GM12878 (cell line): ENCODE measurements at regions of chr10 and their contacts with region 1.

Region 1: GRCh38 chr10:122298598-122299301 is 27.7 kb downstream of the BTBD16 start:
- DNase-seq: no peak
- ATAC-seq: peak; percentile 95
- H3K4me3 ChIP-seq: no peak overlapping the region
- H3K27ac ChIP-seq: no peak overlapping the region
- H3K4me1 ChIP-seq: peaks cover 5% of the 10 kb centered on the region
- H3K27me3 ChIP-seq: no peaks in the 10 kb centered on the region; a peak in 1 of 4 replicates
- CTCF ChIP-seq: peak; percentile 87 to 88 (median 87)
- EP300 ChIP-seq: no peak
- POLR2A ChIP-seq: no peak
- RAD21 ChIP-seq: peak; percentile 93

Region 2: GRCh38 chr10:122207596-122207995 is 91.2 kb before region 1 on chr10:
- CTCF ChIA-PET with region 1: no interaction called
- POLR2A ChIA-PET with region 1: no interaction called
- RAD21 ChIA-PET with region 1: no interaction called
- SMC1A ChIA-PET with region 1: no interaction called
- in situ Hi-C with region 1: no loop called
- intact Hi-C with region 1: no loop called
- DNase-seq: no peak
- ATAC-seq: no peak
- H3K4me3 ChIP-seq: no peak overlapping the region
- H3K27ac ChIP-seq: no peak overlapping the region
- H3K4me1 ChIP-seq: no peaks in the 10 kb centered on the region
- H3K27me3 ChIP-seq: peaks cover 0 to 6% of the 10 kb centered on the region in 2 experiments; a peak in 3 of 4 replicates
- CTCF ChIP-seq: no peak
- EP300 ChIP-seq: no peak
- POLR2A ChIP-seq: no peak
- RAD21 ChIP-seq: no peak

Region 3: GRCh38 chr10:122342293-122343134 is 43.8 kb after region 1 on chr10:
- CTCF ChIA-PET with region 1: interaction called, 10 read pairs
- POLR2A ChIA-PET with region 1: no interaction called
- RAD21 ChIA-PET with region 1: interaction called, 3 read pairs
- SMC1A ChIA-PET with region 1: interaction called, 5 read pairs
- in situ Hi-C with region 1: no loop called
- intact Hi-C with region 1: no loop called
- DNase-seq: no peak
- ATAC-seq: peak; percentile 74
- H3K4me3 ChIP-seq: no peak overlapping the region
- H3K27ac ChIP-seq: no peak overlapping the region
- H3K4me1 ChIP-seq: no peaks in the 10 kb centered on the region; the same call in 1 of the 2 replicates
- H3K27me3 ChIP-seq: peaks cover 0 to 6% of the 10 kb centered on the region in 2 experiments; a peak in 2 of 4 replicates
- CTCF ChIP-seq: peak; percentile 58 to 63 (median 62)
- EP300 ChIP-seq: no peak
- POLR2A ChIP-seq: no peak
- RAD21 ChIP-seq: peak; percentile 70

Region 4: GRCh38 chr10:122426829-122427228 is 128.1 kb after region 1 on chr10:
- CTCF ChIA-PET with region 1: interaction called, 117 read pairs
- POLR2A ChIA-PET with region 1: no interaction called
- RAD21 ChIA-PET with region 1: interaction called, 5 read pairs
- SMC1A ChIA-PET with region 1: interaction called, 4 read pairs
- in situ Hi-C with region 1: loop called (anchors 5 kb)
- intact Hi-C with region 1: no loop called
- DNase-seq: no peak
- ATAC-seq: no peak
- H3K4me3 ChIP-seq: no peak overlapping the region
- H3K27ac ChIP-seq: no peak overlapping the region
- H3K4me1 ChIP-seq: no peaks in the 10 kb centered on the region
- H3K27me3 ChIP-seq: no peaks in the 10 kb centered on the region
- CTCF ChIP-seq: no peak
- EP300 ChIP-seq: no peak
- POLR2A ChIP-seq: no peak
- RAD21 ChIP-seq: no peak

Region 5: GRCh38 chr10:122703439-122704118 is 404.8 kb after region 1 on chr10:
- CTCF ChIA-PET with region 1: no interaction called
- POLR2A ChIA-PET with region 1: no interaction called
- RAD21 ChIA-PET with region 1: no interaction called
- SMC1A ChIA-PET with region 1: no interaction called
- in situ Hi-C with region 1: no loop called
- intact Hi-C with region 1: loop called (anchors 5 kb)
- DNase-seq: no peak
- ATAC-seq: peak; percentile 98
- H3K4me3 ChIP-seq: no peak overlapping the region
- H3K27ac ChIP-seq: no peak overlapping the region
- H3K4me1 ChIP-seq: no peaks in the 10 kb centered on the region
- H3K27me3 ChIP-seq: no peaks in the 10 kb centered on the region; a peak in 1 of 4 replicates
- CTCF ChIP-seq: peak; percentile 82 to 89 (median 87)
- EP300 ChIP-seq: no peak
- POLR2A ChIP-seq: no peak
- RAD21 ChIP-seq: peak; percentile 83